A549 (cell line): ENCODE measurements at regions of chr2 and their contacts with region 1.

Region 1: DNA sequence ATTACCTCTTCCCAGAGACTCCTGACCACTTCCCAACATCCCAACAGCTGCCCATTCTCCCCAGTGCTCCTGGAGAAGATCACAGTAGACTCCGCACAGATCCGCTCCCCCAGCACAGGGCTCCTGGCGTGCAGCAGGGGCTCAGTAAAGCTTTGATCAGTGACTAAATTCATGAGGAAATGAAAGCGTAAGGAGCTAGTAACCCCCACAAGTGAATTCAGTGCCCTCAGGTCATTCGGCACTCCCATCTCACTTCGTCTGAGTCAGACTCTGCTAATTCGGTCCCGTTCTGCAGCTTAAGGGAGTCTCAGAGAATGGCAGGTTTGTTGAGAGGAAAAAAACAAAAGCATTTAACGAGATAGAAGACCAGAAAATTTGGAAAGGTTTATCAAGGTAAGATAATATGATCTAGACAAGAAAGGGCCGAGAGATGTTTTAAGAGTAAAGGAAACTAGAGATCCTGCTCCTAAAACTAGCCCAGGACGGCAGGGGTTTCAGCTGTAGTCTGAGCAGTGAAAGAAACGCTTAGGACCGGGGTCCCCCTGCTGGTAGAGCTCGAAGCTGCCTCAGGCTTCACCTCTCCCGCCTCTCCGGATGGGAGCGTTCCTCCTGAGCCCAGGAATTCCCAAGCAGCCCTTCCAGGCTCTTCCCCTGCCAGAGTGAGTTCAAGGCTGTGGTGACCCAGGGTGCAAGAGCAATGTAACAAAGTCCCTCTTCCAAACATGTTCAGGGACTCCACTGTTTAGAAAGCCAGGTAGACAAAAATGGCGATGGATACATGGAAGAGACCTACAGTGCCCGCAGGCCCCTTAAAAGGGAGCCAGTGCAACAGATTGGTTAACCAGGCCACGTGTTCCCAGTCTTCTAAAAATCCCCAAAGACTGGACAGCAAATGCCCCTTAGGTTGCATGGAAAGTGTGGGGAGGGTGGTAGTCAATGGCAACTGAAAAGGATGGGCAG is 127.3 kb downstream of the DNER start:
- DNase-seq: peak; percentile 76 to 77
- ATAC-seq: peak; percentile 99 to 100
- H3K4me3 ChIP-seq: peak overlapping the region; percentile 32; the same call in 2 of the 3 replicates
- H3K27ac ChIP-seq: peak overlapping the region; percentile 72 to 78
- H3K4me1 ChIP-seq: peaks cover 11% of the 10 kb centered on the region; the same call in 2 of the 3 replicates
- CTCF ChIP-seq: peak; percentile 87
- EP300 ChIP-seq: no peak
- POLR2A ChIP-seq: no peak
- RAD21 ChIP-seq: peak; percentile 97

Region 2: GRCh38 chr2:229133155-229133772 is 453.8 kb before region 1 on chr2:
- CTCF ChIA-PET with region 1: interaction called, 33 read pairs
- POLR2A ChIA-PET with region 1: no interaction called
- DNase-seq: peak; percentile 3 to 62
- ATAC-seq: peak; percentile 77 to 90; a peak in 4 of 6 replicates
- H3K4me3 ChIP-seq: no peak overlapping the region
- H3K27ac ChIP-seq: no peak overlapping the region
- H3K4me1 ChIP-seq: no peaks in the 10 kb centered on the region
- CTCF ChIP-seq: peak; percentile 70
- EP300 ChIP-seq: no peak
- POLR2A ChIP-seq: no peak
- RAD21 ChIP-seq: peak; percentile 83 to 86

Region 3: GRCh38 chr2:229342376-229342775 is 244.7 kb before region 1 on chr2:
- CTCF ChIA-PET with region 1: interaction called, 28 read pairs
- POLR2A ChIA-PET with region 1: no interaction called
- DNase-seq: peak; percentile 7 to 63
- ATAC-seq: peak; percentile 70 to 90; a peak in 4 of 6 replicates
- H3K4me3 ChIP-seq: no peak overlapping the region
- H3K27ac ChIP-seq: no peak overlapping the region
- H3K4me1 ChIP-seq: peaks cover 8% of the 10 kb centered on the region
- CTCF ChIP-seq: peak; percentile 63
- EP300 ChIP-seq: no peak
- POLR2A ChIP-seq: no peak
- RAD21 ChIP-seq: peak; percentile 68 to 70

Region 4: GRCh38 chr2:229438430-229439159 is 148.4 kb before region 1 on chr2:
- CTCF ChIA-PET with region 1: interaction called, 63 read pairs
- POLR2A ChIA-PET with region 1: no interaction called
- DNase-seq: no peak
- ATAC-seq: no peak
- H3K4me3 ChIP-seq: no peak overlapping the region
- H3K27ac ChIP-seq: peak overlapping the region in 1 of 2 experiments; percentile 1; a peak in 1 of 6 replicates
- H3K4me1 ChIP-seq: peaks cover 14% of the 10 kb centered on the region; the same call in 1 of the 3 replicates
- CTCF ChIP-seq: no peak
- EP300 ChIP-seq: no peak
- POLR2A ChIP-seq: no peak
- RAD21 ChIP-seq: no peak

Region 5: DNA sequence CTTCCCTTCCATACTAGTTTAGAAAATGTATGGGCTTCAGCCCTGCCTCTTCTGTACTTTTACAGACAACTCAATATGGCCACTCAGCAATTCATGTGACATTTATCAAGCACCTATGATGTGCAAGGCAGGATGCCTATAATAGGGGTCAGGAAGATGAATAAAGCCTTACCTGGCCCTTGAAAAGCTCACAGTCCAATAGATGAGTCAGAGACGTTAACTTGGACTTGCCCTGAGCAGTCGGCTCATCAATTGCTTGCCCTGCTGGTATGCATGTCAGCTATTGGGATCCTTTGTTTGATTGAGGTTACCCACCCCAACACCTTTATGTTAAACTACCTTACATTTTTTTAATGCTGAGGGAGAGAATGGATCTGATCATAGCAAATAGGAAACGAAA is 11.2 kb after region 1 on chr2:
- CTCF ChIA-PET with region 1: interaction called, 10 read pairs
- POLR2A ChIA-PET with region 1: no interaction called
- DNase-seq: no peak
- ATAC-seq: no peak
- H3K4me3 ChIP-seq: no peak overlapping the region
- H3K27ac ChIP-seq: no peak overlapping the region
- H3K4me1 ChIP-seq: no peaks in the 10 kb centered on the region
- CTCF ChIP-seq: no peak
- EP300 ChIP-seq: no peak
- POLR2A ChIP-seq: no peak
- RAD21 ChIP-seq: no peak